ENCODE measurements at regions of chr10 and their contacts with region 1.

Region 1: GRCh38 chr10:96089670-96090462 is 40.2 kb upstream of the ZNF518A start:
- DNase-seq: peak; percentile 96 to 98
- ATAC-seq: peak; percentile 98
- H3K4me3 ChIP-seq: peak overlapping the region; percentile 30 to 53
- H3K27ac ChIP-seq: peak overlapping the region in 1 of 2 donors; percentile 48
- H3K4me1 ChIP-seq: peaks cover 0 to 1% of the 10 kb centered on the region in 2 donors
- H3K27me3 ChIP-seq: peaks cover 0 to 4% of the 10 kb centered on the region in 2 donors

Region 2: GRCh38 chr10:96043033-96043932 is 46.6 kb before region 1 on chr10 and contains the start of gene CCNJ:
- intact Hi-C with region 1: loop called in 1 of 2 experiments (anchors 2 kb)
- DNase-seq: peak; percentile 92 to 96
- ATAC-seq: peak; percentile 94
- H3K4me3 ChIP-seq: peak within 1 kb of the TSS; percentile 75 to 78
- H3K27ac ChIP-seq: peak within 1 kb of the TSS; percentile 38 to 61
- H3K4me1 ChIP-seq: peaks cover 0 to 2% of the 10 kb centered on the region in 2 donors
- H3K27me3 ChIP-seq: no peaks in the 10 kb centered on the region
- total RNA-seq, gene CCNJ: 5.6 to 6.5 TPM

Region 3: DNA sequence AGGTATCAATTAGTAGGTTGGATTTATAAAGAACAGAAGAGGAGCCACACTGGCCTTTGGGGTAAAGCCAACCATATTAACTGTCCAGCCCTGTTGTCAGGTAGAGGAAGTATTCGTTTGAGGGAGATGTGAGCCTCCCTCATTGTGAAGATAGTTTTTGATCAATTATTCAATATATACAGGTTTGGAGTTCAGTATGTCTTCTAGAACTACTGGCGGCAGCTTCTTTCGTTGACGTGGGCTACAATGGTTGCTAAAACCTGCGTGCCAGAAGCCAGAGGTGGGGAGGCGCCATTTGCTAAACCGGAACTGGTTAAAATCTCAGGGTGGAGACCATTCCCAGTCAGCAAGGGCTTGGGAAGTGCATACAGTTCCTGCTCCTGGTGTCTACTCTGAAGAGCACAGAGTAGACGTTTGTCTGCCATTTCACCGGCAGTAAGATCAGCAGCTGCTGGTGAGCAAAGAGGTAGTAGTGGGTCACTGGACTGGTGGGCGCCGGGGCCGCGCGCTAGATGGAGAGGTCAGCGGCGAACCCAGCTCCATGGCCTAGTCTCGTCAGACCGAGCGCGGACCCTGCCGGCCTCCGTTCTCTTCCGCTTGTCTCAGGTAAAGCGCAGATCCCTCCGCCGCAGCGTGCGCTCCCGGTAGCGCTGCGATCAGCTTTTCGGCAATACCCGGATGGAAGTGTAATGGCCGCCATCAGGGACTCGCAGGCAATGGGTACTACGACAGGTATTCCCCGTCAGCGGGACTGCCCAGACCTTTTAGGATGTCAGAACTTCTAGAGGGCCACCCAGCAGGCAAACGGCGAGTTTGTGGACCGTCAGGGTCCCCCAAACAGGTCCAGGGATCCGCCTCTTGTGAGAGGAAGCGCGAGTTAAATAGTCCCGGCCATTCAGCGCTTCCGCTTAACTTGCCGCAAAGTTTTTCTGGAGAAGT is 39.8 kb after region 1 on chr10 and contains the start of gene ZNF518A:
- intact Hi-C with region 1: loop called (anchors 1 to 2 kb)
- DNase-seq: peak; percentile 96
- ATAC-seq: peak; percentile 98
- H3K4me3 ChIP-seq: peak within 1 kb of the TSS; percentile 68 to 79
- H3K27ac ChIP-seq: peak within 1 kb of the TSS; percentile 58 to 83
- H3K4me1 ChIP-seq: peaks cover 0 to 4% of the 10 kb centered on the region in 2 donors
- H3K27me3 ChIP-seq: no peaks in the 10 kb centered on the region
- total RNA-seq, gene ZNF518A: 18.7 to 25.0 TPM

Measured in aorta (tissue), 5 donors.